ENCODE measurements at regions of chr7 and their contacts with region 1.

Region 1: DNA sequence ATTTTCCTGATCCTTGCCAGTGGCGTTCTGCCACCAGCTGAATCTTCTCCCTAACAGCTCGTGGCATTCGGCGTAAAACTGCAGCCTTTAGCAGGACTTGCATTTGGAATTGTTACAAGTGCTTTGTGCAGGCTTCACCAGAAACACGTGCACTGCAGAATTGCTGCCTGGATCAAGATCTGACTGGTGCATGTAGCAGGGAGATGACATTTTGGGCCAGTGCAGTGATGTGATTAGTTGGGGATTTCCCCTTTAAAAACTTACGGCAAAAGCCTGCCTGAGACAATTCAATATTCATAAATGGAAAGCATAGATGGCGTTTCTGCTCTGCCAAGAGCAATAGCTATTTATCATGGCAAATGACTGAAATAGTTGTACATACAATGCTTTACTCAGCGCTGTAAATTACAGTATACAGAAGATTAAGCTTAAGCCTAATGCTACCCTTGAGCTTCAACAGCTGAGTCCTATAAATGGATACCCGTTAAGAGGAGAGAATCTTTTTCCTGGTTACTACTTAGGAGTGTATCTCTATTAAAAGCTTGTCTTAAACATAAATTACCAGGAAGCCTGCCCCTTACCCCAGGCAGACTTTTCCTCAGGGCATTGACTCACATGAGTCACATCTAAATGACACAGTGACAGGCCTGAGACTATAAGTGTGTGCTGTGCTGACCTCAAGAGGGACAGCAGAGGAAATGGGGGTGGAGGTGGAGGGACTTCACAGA is 106.3 kb downstream of the ATXN7L1 start:
- DNase-seq: peak; percentile 49
- H3K4me3 Mint-ChIP-seq: no peak overlapping the region
- H3K27ac Mint-ChIP-seq: no peak overlapping the region
- H3K4me1 Mint-ChIP-seq: peaks cover 43% of the 10 kb centered on the region
- H3K27me3 Mint-ChIP-seq: peaks cover 7% of the 10 kb centered on the region

Region 2: DNA sequence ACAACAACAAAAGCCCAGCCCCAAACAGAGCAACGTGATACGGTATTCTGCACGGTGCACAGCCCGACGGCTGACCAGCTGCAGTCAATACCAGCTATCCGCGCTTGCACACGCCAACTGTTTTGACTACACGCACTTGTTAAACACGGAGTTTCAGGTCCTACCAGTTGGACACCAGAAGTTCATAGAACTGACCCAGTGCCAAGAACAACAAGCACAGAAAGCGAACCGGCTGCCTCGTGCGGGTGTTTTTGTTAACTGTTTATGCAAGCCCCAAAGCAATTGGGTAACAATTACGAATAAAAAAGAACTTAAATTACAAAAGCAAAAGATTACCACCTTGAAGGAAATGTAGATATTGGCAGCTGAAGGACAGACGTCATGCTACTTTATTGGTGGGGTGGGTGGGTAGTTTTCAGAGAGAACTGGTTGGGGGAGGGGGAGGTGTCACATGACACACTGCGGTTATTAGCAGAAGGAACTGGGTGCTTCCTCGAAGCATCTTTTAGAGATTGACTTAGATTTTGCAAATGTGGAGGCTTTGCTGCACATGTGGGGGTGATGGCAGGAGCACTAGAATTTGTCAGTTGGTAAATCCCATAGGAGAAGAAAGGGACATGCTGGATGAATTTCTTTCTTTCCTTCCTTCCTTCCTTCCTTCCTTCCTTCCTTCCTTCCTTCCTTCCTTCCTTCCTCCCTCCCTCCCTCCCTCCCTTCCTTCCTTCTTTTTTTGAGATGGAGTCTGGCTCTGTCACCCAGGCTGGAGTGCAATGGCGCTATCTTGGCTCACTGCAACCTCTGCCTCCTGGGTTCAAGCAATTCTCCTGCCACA is 78.1 kb before region 1 on chr7:
- CTCF ChIA-PET with region 1: no interaction called
- POLR2A ChIA-PET with region 1: interaction called, 4 read pairs
- intact Hi-C with region 1: loop called (anchors 5 kb)
- DNase-seq: peak; percentile 78
- H3K4me3 Mint-ChIP-seq: peak overlapping the region; percentile 78
- H3K27ac Mint-ChIP-seq: peak overlapping the region; percentile 76
- H3K4me1 Mint-ChIP-seq: peaks cover 47% of the 10 kb centered on the region
- H3K27me3 Mint-ChIP-seq: no peaks in the 10 kb centered on the region

Region 3: GRCh38 chr7:105800442-105800841 is 30.4 kb after region 1 on chr7:
- CTCF ChIA-PET with region 1: interaction called, 21 read pairs
- POLR2A ChIA-PET with region 1: interaction called, 8 read pairs
- intact Hi-C with region 1: no loop called
- DNase-seq: peak; percentile 76
- H3K4me3 Mint-ChIP-seq: no peak overlapping the region
- H3K27ac Mint-ChIP-seq: no peak overlapping the region
- H3K4me1 Mint-ChIP-seq: peaks cover 32% of the 10 kb centered on the region
- H3K27me3 Mint-ChIP-seq: no peaks in the 10 kb centered on the region

Region 4: DNA sequence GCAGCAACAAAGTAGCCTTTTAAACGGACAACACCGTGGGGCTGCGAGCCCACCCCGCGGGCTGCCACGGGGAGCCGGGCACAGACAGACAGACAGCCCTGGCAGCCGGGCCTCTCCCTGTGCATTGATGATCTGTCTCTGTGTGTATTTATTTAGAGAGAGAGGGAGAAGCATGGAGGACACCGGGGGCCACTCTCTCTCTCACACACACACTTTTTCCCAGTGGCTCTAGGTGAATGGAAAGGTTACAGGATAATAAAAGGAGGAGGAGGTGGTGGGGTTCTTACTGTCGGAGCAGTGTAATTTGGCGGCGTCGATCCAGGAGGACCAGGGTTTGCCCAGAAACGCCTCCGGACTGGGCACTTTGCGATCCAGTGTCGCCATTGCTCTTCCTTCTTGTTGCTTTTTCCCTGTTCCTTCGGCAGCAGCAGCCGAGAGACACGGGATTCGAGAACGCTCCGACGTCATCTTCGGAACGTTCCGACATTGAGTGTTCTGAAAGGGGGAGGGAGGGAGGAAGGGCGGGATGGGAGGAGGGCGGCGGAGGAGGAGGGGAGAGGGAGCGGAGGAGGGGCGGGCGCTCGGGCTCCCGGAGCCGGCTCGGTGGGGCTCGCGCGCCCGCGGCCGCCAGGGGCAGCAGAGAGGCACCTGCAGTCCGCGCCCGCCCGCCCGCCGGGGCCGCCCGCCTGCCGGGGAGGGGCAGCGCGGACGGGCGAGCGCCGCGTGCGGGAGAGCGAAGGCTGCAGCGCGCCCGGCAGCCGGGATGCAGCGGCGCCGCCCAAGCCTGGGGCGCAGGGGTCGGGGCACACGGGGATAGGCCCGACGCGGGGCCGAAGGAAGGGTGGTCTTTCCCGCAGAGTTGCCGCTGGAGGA is 106.3 kb after region 1 on chr7 and contains the start of gene ATXN7L1:
- CTCF ChIA-PET with region 1: interaction called, 22 read pairs
- POLR2A ChIA-PET with region 1: no interaction called
- intact Hi-C with region 1: loop called (anchors 1 kb)
- DNase-seq: peak; percentile 93
- H3K4me3 Mint-ChIP-seq: peak within 1 kb of the TSS; percentile 88
- H3K27ac Mint-ChIP-seq: peak within 1 kb of the TSS; percentile 79
- H3K4me1 Mint-ChIP-seq: peaks cover 48% of the 10 kb centered on the region
- H3K27me3 Mint-ChIP-seq: no peaks in the 10 kb centered on the region
- total RNA-seq, gene ATXN7L1: 12.4 to 13.3 TPM

Region 5: GRCh38 chr7:106009403-106010226 is 239.6 kb after region 1 on chr7:
- CTCF ChIA-PET with region 1: interaction called, 12 read pairs
- POLR2A ChIA-PET with region 1: interaction called, 3 read pairs
- intact Hi-C with region 1: loop called (anchors 1 kb)
- DNase-seq: peak; percentile 91
- H3K4me3 Mint-ChIP-seq: no peak overlapping the region
- H3K27ac Mint-ChIP-seq: no peak overlapping the region
- H3K4me1 Mint-ChIP-seq: peaks cover 24% of the 10 kb centered on the region
- H3K27me3 Mint-ChIP-seq: peaks cover 2% of the 10 kb centered on the region

Measured in activated CD4-positive, alpha-beta memory T cell treated with anti-CD3 and anti-CD28 coated beads for 36 hours (primary cell).